ENCODE measurements at regions of chr6 and their contacts with region 1.

Region 1: GRCh38 chr6:28335564-28336283 is at the start of gene ZSCAN31:
- DNase-seq: peak; percentile 97 to 99 (median 99)
- ATAC-seq: peak; percentile 96
- H3K4me3 ChIP-seq: peak within 1 kb of the TSS; percentile 10 to 48
- H3K27ac ChIP-seq: peak within 1 kb of the TSS; percentile 93 to 99 (median 96)
- H3K4me1 ChIP-seq: peaks cover 18% of the 10 kb centered on the region
- H3K27me3 ChIP-seq: no peaks in the 10 kb centered on the region
- CTCF ChIP-seq: no peak
- POLR2A ChIP-seq: peak; percentile 90 to 99 (median 98)
- total RNA-seq, gene ZSCAN31: 14.0 to 26.4 TPM

Region 2: GRCh38 chr6:28266962-28267694 is 68.6 kb before region 1 on chr6 and contains the start of gene ZSCAN26:
- intact Hi-C with region 1: loop called (anchors 10 kb)
- DNase-seq: peak; percentile 77 to 83 (median 78)
- ATAC-seq: peak; percentile 98
- H3K4me3 ChIP-seq: peak within 1 kb of the TSS; percentile 79 to 83
- H3K27ac ChIP-seq: peak within 1 kb of the TSS; percentile 40 to 85 (median 76)
- H3K4me1 ChIP-seq: peaks cover 8% of the 10 kb centered on the region
- H3K27me3 ChIP-seq: no peaks in the 10 kb centered on the region
- CTCF ChIP-seq: no peak
- POLR2A ChIP-seq: peak; percentile 46 to 79 (median 75)
- total RNA-seq, gene ZSCAN26: 8.2 to 22.8 TPM

Measured in body of pancreas (tissue), 4 donors.